GM23248 (cell line): ENCODE measurements at regions of chr10 and their contacts with region 1.

Region 1: GRCh38 chr10:43671656-43672531 is 23.2 kb upstream of the ZNF32 start:
- DNase-seq: peak; percentile 74
- H3K4me3 ChIP-seq: no peak overlapping the region
- H3K27ac ChIP-seq: no peak overlapping the region
- H3K4me1 ChIP-seq: peaks cover 3% of the 10 kb centered on the region; the same call in 1 of the 2 replicates
- H3K27me3 ChIP-seq: no peaks in the 10 kb centered on the region

Region 2: GRCh38 chr10:44386546-44387052 is 714.7 kb after region 1 on chr10:
- in situ Hi-C with region 1: loop called (anchors 5 kb)
- DNase-seq: peak; percentile 88
- H3K4me3 ChIP-seq: peak overlapping the region; percentile 60
- H3K27ac ChIP-seq: no peak overlapping the region
- H3K4me1 ChIP-seq: peaks cover 18% of the 10 kb centered on the region
- H3K27me3 ChIP-seq: no peaks in the 10 kb centered on the region

Region 3: DNA sequence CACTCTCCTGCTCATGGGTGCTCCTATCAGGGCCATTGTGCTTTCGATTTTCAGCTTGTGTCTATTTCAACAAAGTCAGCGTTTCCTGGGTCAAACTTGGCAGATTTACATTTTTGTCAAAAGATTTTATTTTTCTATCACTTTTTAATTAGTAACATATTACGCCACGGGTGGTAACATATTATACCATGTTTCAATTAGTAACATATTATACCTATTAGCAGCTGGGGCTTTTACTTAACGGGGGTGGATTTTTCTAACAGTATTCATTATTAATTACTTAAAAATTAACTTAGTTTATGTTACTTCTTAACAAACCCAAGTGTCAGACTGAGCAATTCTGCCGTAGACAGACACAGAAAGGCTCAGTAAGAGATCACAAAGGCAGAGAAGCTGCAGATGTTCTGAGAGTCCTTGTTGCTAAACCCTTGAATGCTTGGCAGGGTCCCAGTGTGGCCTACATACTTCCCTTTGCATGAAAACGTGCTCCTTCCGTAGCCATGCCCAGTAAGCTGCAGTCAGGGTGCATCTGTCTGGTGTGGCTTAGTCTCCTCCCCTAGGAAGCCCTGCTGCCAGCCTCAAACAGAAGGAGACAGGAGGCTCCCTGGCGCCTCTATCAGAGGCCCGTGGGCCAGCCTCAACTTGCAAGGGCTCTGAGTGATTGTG is 976.1 kb after region 1 on chr10:
- in situ Hi-C with region 1: loop called (anchors 25 kb)
- DNase-seq: peak; percentile 88
- H3K4me3 ChIP-seq: no peak overlapping the region
- H3K27ac ChIP-seq: 0 out of 2 replicates have a peak overlapping the region, but pooled peaks have one; percentile 7
- H3K4me1 ChIP-seq: peaks cover 32% of the 10 kb centered on the region
- H3K27me3 ChIP-seq: no peaks in the 10 kb centered on the region

Region 4: GRCh38 chr10:44864637-44865288 is 1192.9 kb after region 1 on chr10:
- in situ Hi-C with region 1: loop called (anchors 10 kb)
- DNase-seq: peak; percentile 93
- H3K4me3 ChIP-seq: peak overlapping the region; percentile 73
- H3K27ac ChIP-seq: peak overlapping the region; percentile 91
- H3K4me1 ChIP-seq: peaks cover 36% of the 10 kb centered on the region
- H3K27me3 ChIP-seq: no peaks in the 10 kb centered on the region

Region 5: GRCh38 chr10:44974628-44975431 is 1302.9 kb after region 1 on chr10:
- in situ Hi-C with region 1: loop called (anchors 25 kb)
- DNase-seq: peak; percentile 82
- H3K4me3 ChIP-seq: peak overlapping the region; percentile 75
- H3K27ac ChIP-seq: peak overlapping the region; percentile 37
- H3K4me1 ChIP-seq: peaks cover 24% of the 10 kb centered on the region
- H3K27me3 ChIP-seq: no peaks in the 10 kb centered on the region